Activated CD4-positive, alpha-beta memory T cell treated with anti-CD3 and anti-CD28 coated beads for 36 hours (primary cell): ENCODE measurements at regions of chr7 and their contacts with region 1.

Region 1: GRCh38 chr7:70361821-70362220 is 763.5 kb downstream of the AUTS2 start:
- DNase-seq: no peak
- H3K4me3 Mint-ChIP-seq: no peak overlapping the region
- H3K27ac Mint-ChIP-seq: no peak overlapping the region
- H3K4me1 Mint-ChIP-seq: peaks cover 10% of the 10 kb centered on the region
- H3K27me3 Mint-ChIP-seq: no peaks in the 10 kb centered on the region

Region 2: DNA sequence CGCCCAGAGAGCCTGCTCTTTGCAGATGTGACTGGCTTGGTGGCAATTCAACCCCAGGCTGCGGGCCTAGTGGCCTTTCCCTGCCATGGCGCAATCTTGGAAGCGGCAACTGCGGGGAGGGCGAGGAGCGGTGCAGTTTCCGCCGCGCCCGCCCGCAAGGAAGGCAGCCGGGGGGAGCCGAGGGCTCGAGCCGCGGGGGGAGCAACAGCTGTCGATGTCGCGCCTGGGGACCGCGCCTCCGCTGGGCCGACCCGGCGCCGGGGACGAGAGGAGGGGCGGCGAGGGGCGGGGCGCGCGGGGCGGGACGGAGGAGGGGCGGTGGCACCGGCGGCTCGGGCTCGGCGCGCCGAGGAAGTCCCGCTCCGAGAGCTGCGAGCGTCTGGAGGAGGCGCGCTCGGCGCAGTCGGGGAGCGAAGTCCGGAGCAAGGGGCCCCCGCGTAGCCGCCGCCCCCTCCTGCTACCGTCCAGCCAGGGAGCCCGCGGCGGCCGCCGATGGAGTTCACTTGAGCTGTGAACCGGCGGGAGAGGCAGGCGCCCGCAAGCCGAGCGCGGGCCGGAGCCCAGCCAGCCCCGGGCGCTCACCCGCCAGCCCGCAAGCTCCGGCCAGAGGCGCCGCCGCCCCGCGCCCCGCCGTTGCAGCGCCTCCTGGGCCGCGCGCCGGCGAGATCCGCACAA is 332.0 kb after region 1 on chr7:
- CTCF ChIA-PET with region 1: interaction called, 3 read pairs
- POLR2A ChIA-PET with region 1: no interaction called
- intact Hi-C with region 1: loop called (anchors 5 kb)
- DNase-seq: peak; percentile 44
- H3K4me3 Mint-ChIP-seq: peak overlapping the region; percentile 13
- H3K27ac Mint-ChIP-seq: no peak overlapping the region
- H3K4me1 Mint-ChIP-seq: peaks cover 7% of the 10 kb centered on the region
- H3K27me3 Mint-ChIP-seq: peaks cover 37% of the 10 kb centered on the region